T-cell (primary cell): ENCODE measurements at regions of chr13 and their contacts with region 1.

Region 1: DNA sequence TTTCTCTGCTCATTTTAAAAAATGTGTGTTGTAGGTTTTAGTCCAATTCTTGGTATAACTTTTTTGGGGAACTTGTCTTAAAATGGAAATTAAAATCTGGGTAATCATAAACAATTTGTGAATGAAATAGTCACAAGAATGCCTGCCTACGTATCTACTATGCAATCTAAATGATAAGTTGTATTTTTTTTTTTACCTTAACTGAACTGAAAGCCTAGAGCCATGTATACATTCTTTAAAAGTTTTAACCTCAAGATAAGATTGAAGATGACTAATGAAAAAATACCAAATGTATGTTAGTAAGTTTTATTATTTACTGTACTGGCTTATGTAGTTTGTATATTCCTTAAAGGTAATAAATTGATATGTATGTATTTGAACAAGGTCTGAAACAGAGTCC is 44.5 kb downstream of the PIBF1 start:
- DNase-seq: no peak
- ATAC-seq: no peak
- H3K4me3 ChIP-seq: no peak overlapping the region
- H3K4me3 Mint-ChIP-seq: no peak overlapping the region
- H3K27ac ChIP-seq: no peak overlapping the region
- H3K27ac Mint-ChIP-seq: peak overlapping the region in 1 of 2 donors; percentile 39
- H3K4me1 ChIP-seq: no peaks in the 10 kb centered on the region
- H3K4me1 Mint-ChIP-seq: peaks cover 28 to 41% (median 40%) of the 10 kb centered on the region in 3 donors
- H3K27me3 ChIP-seq: no peaks in the 10 kb centered on the region
- H3K27me3 Mint-ChIP-seq: no peaks in the 10 kb centered on the region

Region 2: GRCh38 chr13:72757792-72758535 is 68.5 kb before region 1 on chr13:
- CTCF ChIA-PET with region 1: no interaction called
- POLR2A ChIA-PET with region 1: no interaction called
- DNase-seq: no peak
- ATAC-seq: no peak
- H3K4me3 ChIP-seq: no peak overlapping the region
- H3K4me3 Mint-ChIP-seq: no peak overlapping the region
- H3K27ac ChIP-seq: no peak overlapping the region
- H3K27ac Mint-ChIP-seq: no peak overlapping the region
- H3K4me1 ChIP-seq: no peaks in the 10 kb centered on the region
- H3K4me1 Mint-ChIP-seq: peaks cover 1 to 4% (median 4%) of the 10 kb centered on the region in 3 donors
- H3K27me3 ChIP-seq: no peaks in the 10 kb centered on the region
- H3K27me3 Mint-ChIP-seq: no peaks in the 10 kb centered on the region

Region 3: GRCh38 chr13:72850959-72851677 is 24.7 kb after region 1 on chr13:
- CTCF ChIA-PET with region 1: no interaction called
- POLR2A ChIA-PET with region 1: interaction called in 1 of 2 experiments, 15 read pairs
- DNase-seq: no peak
- ATAC-seq: no peak
- H3K4me3 ChIP-seq: no peak overlapping the region
- H3K4me3 Mint-ChIP-seq: no peak overlapping the region
- H3K27ac ChIP-seq: no peak overlapping the region
- H3K27ac Mint-ChIP-seq: no peak overlapping the region
- H3K4me1 ChIP-seq: no peaks in the 10 kb centered on the region
- H3K4me1 Mint-ChIP-seq: peaks cover 0 to 3% (median 0%) of the 10 kb centered on the region in 3 donors
- H3K27me3 ChIP-seq: no peaks in the 10 kb centered on the region
- H3K27me3 Mint-ChIP-seq: no peaks in the 10 kb centered on the region

Region 4: DNA sequence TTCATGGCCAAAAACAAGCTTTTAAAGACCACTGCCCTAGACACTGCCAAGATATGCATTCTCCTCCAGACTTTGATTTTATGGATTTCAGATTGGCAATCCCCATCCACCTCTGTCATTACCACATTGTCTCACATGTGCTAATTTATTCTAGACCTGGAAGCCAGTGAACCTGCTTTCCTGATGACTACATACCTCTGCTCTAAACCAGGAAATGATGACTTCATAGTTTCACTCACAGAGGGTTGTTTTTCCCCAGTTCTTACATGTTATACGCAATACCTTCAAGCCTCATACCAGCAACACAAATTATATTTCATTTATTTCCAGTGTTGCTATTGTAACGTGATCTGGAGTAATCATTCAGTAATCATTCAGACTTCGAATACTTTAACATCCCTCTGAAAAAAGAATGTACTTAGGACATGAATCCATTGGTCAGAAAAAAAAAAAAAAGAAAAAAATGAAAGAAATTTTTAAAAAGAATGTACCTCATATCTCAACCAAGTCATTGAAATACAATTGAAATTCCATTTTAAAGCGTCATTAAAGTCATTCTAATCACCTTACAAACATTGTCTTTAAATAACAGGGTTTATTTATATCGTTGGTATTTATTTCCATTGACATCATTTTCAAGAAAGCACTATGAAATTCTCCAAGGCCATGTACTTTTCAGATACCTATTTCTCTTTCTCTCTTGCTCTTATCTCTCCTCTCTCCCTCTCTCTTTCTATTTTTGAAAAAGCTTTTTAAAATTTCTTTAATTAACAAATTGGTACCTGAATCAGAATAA is 199.0 kb after region 1 on chr13:
- CTCF ChIA-PET with region 1: no interaction called
- POLR2A ChIA-PET with region 1: no interaction called
- DNase-seq: no peak
- ATAC-seq: no peak
- H3K4me3 ChIP-seq: no peak overlapping the region
- H3K4me3 Mint-ChIP-seq: no peak overlapping the region
- H3K27ac ChIP-seq: no peak overlapping the region
- H3K27ac Mint-ChIP-seq: no peak overlapping the region
- H3K4me1 ChIP-seq: no peaks in the 10 kb centered on the region
- H3K4me1 Mint-ChIP-seq: no peaks in the 10 kb centered on the region
- H3K27me3 ChIP-seq: no peaks in the 10 kb centered on the region
- H3K27me3 Mint-ChIP-seq: no peaks in the 10 kb centered on the region

Region 5: GRCh38 chr13:73286177-73286576 is 459.7 kb after region 1 on chr13:
- CTCF ChIA-PET with region 1: interaction called in 1 of 2 experiments, 10 read pairs
- POLR2A ChIA-PET with region 1: no interaction called
- DNase-seq: no peak
- ATAC-seq: no peak
- H3K4me3 ChIP-seq: no peak overlapping the region
- H3K4me3 Mint-ChIP-seq: no peak overlapping the region
- H3K27ac ChIP-seq: no peak overlapping the region
- H3K27ac Mint-ChIP-seq: no peak overlapping the region
- H3K4me1 ChIP-seq: no peaks in the 10 kb centered on the region
- H3K4me1 Mint-ChIP-seq: no peaks in the 10 kb centered on the region
- H3K27me3 ChIP-seq: no peaks in the 10 kb centered on the region
- H3K27me3 Mint-ChIP-seq: peaks cover 7 to 11% of the 10 kb centered on the region in 2 donors

Region 6: GRCh38 chr13:74077792-74078191 is 1251.3 kb after region 1 on chr13:
- CTCF ChIA-PET with region 1: no interaction called
- POLR2A ChIA-PET with region 1: no interaction called
- DNase-seq: no peak
- ATAC-seq: no peak
- H3K4me3 ChIP-seq: no peak overlapping the region
- H3K4me3 Mint-ChIP-seq: no peak overlapping the region
- H3K27ac ChIP-seq: no peak overlapping the region
- H3K27ac Mint-ChIP-seq: no peak overlapping the region
- H3K4me1 ChIP-seq: peaks cover 6 to 25% of the 10 kb centered on the region in 2 experiments
- H3K4me1 Mint-ChIP-seq: peaks cover 71 to 85% (median 83%) of the 10 kb centered on the region in 3 donors
- H3K27me3 ChIP-seq: no peaks in the 10 kb centered on the region
- H3K27me3 Mint-ChIP-seq: no peaks in the 10 kb centered on the region